ENCODE measurements at regions of chr15 and their contacts with region 1.

Region 1: DNA sequence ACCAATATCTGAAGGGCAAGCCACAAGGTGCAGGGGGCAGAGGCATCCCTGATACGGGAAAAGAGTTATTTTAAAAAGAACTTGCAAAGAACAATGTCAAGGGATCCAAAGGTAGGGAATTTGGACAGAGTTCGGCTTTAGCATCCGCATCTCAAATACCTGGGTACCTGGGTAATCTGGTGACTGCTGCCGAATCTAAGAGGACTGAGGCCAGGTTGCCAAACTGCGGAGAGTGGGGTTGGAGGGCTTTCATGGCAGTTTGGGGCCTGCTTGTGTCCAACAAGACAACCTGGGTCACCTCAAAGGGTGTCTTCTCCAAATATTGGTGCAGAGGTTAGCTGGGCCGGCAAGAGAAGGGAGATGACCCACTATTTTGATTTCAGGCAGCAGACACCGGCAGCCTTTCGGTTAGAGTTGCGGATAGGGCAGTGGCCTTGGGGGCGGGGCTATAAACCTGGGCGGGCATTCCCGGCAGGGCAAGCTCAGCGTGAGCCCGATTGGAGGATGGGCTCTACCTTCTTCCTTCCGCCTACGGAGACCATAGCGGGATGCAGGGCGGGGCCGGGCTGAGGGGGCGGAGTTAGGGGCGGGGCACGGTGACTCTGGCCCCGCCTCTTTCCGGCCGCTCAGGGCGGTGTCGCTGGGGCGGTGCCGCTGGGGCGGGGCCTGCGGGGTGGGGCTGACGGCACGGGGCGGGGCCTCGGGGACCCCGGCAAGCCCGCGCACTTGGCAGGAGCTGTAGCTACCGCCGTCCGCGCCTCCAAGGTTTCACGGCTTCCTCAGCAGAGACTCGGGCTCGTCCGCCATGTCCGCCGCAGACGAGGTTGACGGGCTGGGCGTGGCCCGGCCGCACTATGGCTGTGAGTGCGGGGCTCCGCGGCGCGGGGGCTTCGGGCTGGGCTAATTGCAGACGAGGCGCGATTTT is at the start of gene IQGAP1:
- DNase-seq: peak; percentile 98
- total RNA-seq, gene IQGAP1: 216 to 265 TPM

Region 2: DNA sequence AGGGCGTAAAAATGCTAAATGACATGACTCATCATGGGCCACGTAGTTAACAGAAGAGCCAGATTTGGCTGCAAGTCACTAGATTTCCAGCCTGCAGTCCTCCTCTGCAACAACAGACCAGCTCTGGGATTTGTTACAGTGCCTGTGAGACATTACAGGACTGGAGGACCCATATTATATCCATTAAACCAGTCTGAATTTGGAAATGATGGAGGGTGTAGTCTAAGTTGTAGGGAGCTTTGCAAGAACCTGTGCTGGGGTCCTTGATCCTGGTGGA is 24.9 kb before region 1 on chr15:
- intact Hi-C with region 1: loop called in 1 of 2 experiments (anchors 2 kb)
- DNase-seq: no peak

Region 3: DNA sequence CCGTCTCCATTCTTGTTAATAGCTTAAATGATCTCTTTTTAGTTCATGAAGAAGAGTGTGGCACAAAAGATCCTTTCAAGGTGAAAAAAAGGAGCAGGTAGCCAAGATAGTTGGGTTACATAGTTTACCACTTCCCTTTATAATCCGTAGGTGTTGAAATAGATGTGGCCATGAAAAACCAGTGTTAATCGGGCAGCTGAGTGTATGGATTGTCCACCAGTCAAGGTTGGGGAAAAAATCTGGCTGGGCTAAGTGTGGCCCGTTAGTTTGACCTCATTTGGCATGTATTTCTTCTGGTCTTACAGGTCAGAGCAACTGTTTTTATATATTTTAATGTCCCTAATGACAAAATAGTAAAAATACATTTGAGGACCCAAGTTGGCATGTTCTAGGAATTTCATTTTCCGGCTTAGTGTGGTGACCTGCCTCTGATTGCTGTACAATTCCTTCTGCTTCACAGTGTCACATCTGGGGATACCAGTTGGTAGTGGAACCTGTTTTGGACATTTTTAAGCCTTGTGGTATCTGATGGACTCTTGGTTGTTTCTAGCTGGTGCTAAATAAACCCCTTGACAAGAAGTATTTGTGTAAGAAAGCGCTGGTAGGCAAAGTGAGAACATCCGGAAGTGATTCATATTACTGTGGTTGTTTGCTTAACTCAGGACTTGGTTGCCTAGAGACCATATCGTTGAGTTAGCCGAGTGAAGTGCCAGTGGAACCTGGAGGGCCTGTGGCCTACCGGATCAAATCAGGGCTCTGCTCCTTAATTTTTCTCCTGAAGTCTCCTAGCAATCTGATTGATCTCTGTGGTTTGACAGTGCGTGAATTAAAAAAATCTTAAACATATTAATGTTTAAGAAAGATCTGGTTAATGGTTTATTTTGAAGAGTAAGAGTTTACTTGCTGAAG is 12.9 kb after region 1 on chr15:
- intact Hi-C with region 1: loop called in 1 of 2 experiments (anchors 1 kb)
- DNase-seq: no peak

Region 4: GRCh38 chr15:90463381-90463780 is 75.6 kb after region 1 on chr15:
- intact Hi-C with region 1: loop called in 1 of 2 experiments (anchors 10 kb)
- DNase-seq: no peak

Measured in posterior vena cava (tissue), 2 donors.